Mammary epithelial cell (primary cell): ENCODE measurements at regions of chr1 and their contacts with region 1.

Region 1: GRCh38 chr1:18949686-18950400 is 6.6 kb downstream of the IFFO2 start:
- DNase-seq: peak; percentile 47
- H3K4me3 ChIP-seq: peak overlapping the region; percentile 36 to 43 (median 39)
- H3K27ac ChIP-seq: peak overlapping the region; percentile 92
- H3K4me1 ChIP-seq: peaks cover 85% of the 10 kb centered on the region
- H3K27me3 ChIP-seq: no peaks in the 10 kb centered on the region
- CTCF ChIP-seq: peak in 1 of 2 donors; percentile 37

Region 2: GRCh38 chr1:18926315-18927081 is 23.3 kb before region 1 on chr1:
- CTCF ChIA-PET with region 1: no interaction called
- dilution Hi-C with region 1: no loop called
- in situ Hi-C with region 1: no loop called
- intact Hi-C with region 1: loop called (anchors 1 kb)
- DNase-seq: peak; percentile 97
- H3K4me3 ChIP-seq: peak overlapping the region in 1 of 3 experiments; percentile 1
- H3K27ac ChIP-seq: peak overlapping the region; percentile 90
- H3K4me1 ChIP-seq: peaks cover 82% of the 10 kb centered on the region
- H3K27me3 ChIP-seq: no peaks in the 10 kb centered on the region
- CTCF ChIP-seq: no peak

Region 3: GRCh38 chr1:18938707-18939389 is 11.0 kb before region 1 on chr1:
- CTCF ChIA-PET with region 1: no interaction called
- dilution Hi-C with region 1: no loop called
- in situ Hi-C with region 1: no loop called
- intact Hi-C with region 1: loop called (anchors 1 kb)
- DNase-seq: no peak
- H3K4me3 ChIP-seq: no peak overlapping the region
- H3K27ac ChIP-seq: peak overlapping the region; percentile 96
- H3K4me1 ChIP-seq: peaks cover 70% of the 10 kb centered on the region
- H3K27me3 ChIP-seq: no peaks in the 10 kb centered on the region
- CTCF ChIP-seq: no peak

Region 4: GRCh38 chr1:19074902-19075721 is 125.3 kb after region 1 on chr1:
- CTCF ChIA-PET with region 1: no interaction called
- dilution Hi-C with region 1: no loop called
- in situ Hi-C with region 1: no loop called
- intact Hi-C with region 1: loop called (anchors 1 kb)
- DNase-seq: peak; percentile 97
- H3K4me3 ChIP-seq: no peak overlapping the region
- H3K27ac ChIP-seq: peak overlapping the region; percentile 71
- H3K4me1 ChIP-seq: peaks cover 48% of the 10 kb centered on the region
- H3K27me3 ChIP-seq: no peaks in the 10 kb centered on the region
- CTCF ChIP-seq: no peak